ENCODE measurements at regions of chr17 and their contacts with region 1.

Region 1: DNA sequence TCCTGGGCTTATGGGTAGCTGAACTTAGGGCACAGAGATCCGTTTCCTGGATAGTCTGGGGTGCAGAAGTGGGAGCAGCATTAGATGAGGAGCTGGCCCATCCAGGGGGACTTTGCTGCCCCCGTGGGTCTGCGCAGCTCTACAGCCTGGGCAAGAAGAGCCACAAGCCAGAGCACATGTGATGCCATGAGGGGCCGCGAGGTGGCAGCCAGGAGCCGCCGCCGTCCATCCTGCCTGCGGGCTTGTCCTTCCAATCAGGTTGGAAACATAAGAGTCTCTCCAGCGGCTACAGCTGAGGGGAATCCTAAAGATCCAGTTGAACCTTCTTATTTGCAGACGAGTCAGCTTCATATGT is 21.9 kb downstream of the C1QTNF1 start:
- H3K4me3 Mint-ChIP-seq: no peak overlapping the region
- H3K27ac Mint-ChIP-seq: no peak overlapping the region
- H3K4me1 Mint-ChIP-seq: no peaks in the 10 kb centered on the region
- H3K27me3 Mint-ChIP-seq: peaks cover 37% of the 10 kb centered on the region

Region 2: DNA sequence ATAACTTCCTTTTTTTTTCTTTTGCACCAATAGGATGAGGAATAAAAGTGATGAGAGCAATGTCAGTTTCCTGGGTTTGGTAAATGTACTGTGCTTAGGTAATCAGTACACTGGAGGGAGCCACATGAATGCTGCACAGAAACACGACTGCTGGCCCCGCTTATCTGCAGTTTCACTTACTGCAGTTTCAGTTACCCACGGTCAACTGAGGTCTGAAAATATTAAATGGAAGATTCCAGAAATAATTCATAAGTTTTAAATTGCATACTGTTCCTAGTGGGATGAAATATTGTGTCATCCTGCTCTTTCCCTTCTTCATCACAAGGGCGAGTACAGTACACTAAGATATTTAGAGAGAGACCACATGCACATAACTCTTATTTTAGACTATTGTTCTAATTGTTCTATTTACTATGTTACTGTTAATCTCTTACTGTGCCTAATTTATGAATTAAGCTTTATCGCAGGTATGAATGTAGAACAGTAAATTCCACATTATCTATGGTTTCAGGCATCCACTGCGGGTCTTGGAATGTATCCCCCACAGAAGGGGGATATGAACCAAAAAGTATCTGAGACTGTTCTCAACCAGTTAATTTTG is 59.7 kb before region 1 on chr17:
- intact Hi-C with region 1: loop called (anchors 2 kb)
- H3K4me3 Mint-ChIP-seq: peak overlapping the region; percentile 53
- H3K27ac Mint-ChIP-seq: peak overlapping the region; percentile 87
- H3K4me1 Mint-ChIP-seq: peaks cover 26% of the 10 kb centered on the region
- H3K27me3 Mint-ChIP-seq: no peaks in the 10 kb centered on the region

Region 3: DNA sequence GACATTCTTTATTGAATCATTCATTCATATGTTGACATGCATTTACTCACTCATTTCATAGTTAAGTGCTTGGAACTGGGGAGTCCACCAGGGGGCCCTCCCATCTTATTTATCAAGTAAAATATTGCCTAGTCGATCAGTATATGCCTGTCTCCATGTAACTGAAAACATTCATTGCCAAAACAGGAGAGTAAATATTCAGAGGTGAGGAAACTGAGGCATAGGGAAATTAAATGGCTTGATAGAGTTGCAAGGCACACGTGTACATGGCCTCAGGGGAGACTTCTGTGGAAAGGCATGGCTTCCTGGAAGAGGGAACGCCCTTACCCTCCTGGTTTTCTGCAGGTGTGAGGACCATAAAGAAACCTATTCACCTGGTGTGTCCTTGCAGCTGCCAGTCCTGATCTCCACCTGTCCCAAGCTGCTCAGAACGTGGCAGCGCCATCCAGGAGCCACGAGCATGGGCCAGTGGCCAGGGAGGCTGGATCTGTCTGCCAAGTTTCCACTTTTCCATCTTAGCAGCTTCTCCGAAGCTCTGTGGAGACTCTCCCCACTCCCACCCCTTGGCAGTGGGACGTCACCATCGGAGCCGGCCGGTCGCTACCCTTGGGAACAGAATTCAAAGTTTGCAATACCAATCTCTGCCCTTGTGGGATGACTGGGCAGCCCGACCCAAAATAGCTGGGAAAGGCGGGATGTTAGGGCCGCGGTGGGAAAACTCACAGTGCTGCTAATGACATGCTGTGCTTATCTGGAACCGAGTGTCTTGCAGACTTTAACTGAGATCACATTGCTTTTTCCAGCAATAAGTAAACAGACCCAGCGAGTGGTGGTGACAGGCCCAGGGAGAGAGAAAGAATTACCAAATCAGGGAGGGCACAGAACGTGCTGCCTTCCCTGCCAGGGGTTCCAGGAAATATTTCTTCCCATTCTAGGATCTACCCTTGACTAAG is 25.9 kb before region 1 on chr17:
- intact Hi-C with region 1: loop called (anchors 1 kb)
- H3K4me3 Mint-ChIP-seq: no peak overlapping the region
- H3K27ac Mint-ChIP-seq: no peak overlapping the region
- H3K4me1 Mint-ChIP-seq: peaks cover 21% of the 10 kb centered on the region
- H3K27me3 Mint-ChIP-seq: peaks cover 57% of the 10 kb centered on the region

Region 4: DNA sequence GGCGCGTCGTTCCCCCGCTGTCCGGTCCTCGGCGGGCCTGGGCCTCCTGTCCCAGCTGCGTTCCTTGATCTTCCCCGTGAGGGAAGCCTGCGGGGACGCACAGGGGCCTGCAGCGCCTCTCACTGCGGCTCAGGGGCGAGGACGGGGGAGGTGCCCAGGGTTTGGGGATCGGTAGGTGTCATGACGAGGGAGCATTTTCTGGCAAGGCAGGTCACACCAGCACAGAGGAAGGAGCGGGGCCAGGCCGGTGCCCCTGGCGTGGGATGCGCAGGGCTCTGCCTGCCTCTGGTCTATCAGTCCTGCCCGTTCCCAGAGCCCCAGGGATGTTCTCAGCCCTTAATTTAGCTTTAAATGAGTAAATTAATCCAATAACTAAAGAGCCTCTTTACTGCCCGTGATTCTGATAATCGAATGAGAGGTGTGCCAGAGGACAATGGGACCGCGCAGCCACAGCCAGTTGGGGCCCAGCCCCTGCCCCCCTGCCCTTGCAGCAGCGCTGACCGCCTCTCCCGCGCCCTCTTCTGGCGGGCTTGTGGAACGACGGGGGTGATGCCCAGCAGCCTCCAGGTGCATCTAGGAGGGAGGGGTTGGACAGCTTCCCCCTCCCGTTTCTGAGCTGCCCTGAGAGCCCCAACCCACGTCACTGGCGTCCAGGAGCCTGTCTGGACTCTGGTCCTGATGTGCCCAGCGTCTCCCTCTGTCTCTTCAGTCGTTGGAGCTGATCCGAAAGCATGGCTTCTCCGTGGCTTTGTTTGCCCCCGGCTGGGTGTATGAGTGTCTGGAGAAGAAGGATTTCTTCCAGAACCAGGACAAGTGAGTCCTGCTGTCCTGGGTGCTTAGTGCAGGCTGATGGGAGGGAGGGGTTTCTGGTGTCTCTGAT is 36.7 kb after region 1 on chr17:
- intact Hi-C with region 1: loop called (anchors 5 kb)
- H3K4me3 Mint-ChIP-seq: no peak overlapping the region
- H3K27ac Mint-ChIP-seq: no peak overlapping the region
- H3K4me1 Mint-ChIP-seq: no peaks in the 10 kb centered on the region
- H3K27me3 Mint-ChIP-seq: no peaks in the 10 kb centered on the region

Region 5: GRCh38 chr17:79393358-79394202 is 347.8 kb after region 1 on chr17:
- intact Hi-C with region 1: loop called (anchors 5 kb)
- H3K4me3 Mint-ChIP-seq: no peak overlapping the region
- H3K27ac Mint-ChIP-seq: no peak overlapping the region
- H3K4me1 Mint-ChIP-seq: no peaks in the 10 kb centered on the region
- H3K27me3 Mint-ChIP-seq: peaks cover 61% of the 10 kb centered on the region